ENCODE measurements at regions of chr3 and their contacts with region 1.

Region 1: GRCh38 chr3:125585595-125586223 is 9.6 kb downstream of the OSBPL11 start:
- DNase-seq: no peak
- H3K4me3 ChIP-seq: no peak overlapping the region
- H3K27ac ChIP-seq: no peak overlapping the region
- H3K4me1 ChIP-seq: peaks cover 5 to 74% (median 47%) of the 10 kb centered on the region in 6 donors
- H3K27me3 ChIP-seq: no peaks in the 10 kb centered on the region
- CTCF ChIP-seq: peak; percentile 52 to 82 (median 75)
- POLR2A ChIP-seq: no peak

Region 2: DNA sequence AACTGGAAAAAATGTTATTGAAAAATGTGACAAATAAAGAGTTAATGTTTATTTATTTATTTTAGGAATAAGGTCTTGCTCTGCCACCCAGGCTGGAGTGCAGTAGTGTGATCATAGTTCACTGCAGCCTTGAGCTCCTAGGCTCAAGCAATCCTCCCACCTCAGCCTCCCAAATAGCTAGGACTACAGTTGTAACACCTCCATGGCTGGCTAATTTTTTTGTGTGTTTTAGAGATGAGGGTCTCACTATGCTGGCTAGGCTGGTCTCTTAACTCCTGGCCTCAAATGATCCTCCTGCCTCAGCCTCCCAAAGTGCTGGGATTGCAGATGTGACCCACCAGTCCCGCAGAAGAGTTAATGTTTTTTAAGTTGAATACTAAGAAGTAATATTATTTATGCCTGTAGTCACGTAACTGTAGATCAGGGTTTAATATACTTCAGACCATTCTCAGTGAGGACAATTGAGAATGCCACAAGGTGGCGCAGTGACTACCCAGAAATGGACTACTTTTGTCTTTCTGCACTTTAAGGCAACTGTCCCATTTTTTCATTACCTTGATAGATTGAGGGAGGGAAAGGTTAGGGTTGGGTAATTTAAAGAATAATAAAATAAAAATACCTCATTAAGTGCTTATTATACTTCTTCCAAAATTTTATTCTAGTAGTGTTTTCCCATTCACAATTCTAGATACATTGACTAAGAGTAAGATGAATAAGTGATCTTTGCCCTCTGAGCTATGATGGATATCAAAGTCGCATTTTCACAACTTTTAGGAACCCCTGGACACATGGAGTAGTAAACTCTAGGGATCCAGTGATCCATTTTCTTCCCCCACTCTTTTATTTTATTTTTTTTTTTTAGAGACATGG is 657.1 kb before region 1 on chr3:
- intact Hi-C with region 1: loop called (anchors 10 kb)
- DNase-seq: no peak
- H3K4me3 ChIP-seq: no peak overlapping the region
- H3K27ac ChIP-seq: no peak overlapping the region
- H3K4me1 ChIP-seq: peaks cover 0 to 4% (median 0%) of the 10 kb centered on the region in 6 donors
- H3K27me3 ChIP-seq: no peaks in the 10 kb centered on the region
- CTCF ChIP-seq: peak; percentile 46 to 77 (median 68)
- POLR2A ChIP-seq: no peak

Region 3: DNA sequence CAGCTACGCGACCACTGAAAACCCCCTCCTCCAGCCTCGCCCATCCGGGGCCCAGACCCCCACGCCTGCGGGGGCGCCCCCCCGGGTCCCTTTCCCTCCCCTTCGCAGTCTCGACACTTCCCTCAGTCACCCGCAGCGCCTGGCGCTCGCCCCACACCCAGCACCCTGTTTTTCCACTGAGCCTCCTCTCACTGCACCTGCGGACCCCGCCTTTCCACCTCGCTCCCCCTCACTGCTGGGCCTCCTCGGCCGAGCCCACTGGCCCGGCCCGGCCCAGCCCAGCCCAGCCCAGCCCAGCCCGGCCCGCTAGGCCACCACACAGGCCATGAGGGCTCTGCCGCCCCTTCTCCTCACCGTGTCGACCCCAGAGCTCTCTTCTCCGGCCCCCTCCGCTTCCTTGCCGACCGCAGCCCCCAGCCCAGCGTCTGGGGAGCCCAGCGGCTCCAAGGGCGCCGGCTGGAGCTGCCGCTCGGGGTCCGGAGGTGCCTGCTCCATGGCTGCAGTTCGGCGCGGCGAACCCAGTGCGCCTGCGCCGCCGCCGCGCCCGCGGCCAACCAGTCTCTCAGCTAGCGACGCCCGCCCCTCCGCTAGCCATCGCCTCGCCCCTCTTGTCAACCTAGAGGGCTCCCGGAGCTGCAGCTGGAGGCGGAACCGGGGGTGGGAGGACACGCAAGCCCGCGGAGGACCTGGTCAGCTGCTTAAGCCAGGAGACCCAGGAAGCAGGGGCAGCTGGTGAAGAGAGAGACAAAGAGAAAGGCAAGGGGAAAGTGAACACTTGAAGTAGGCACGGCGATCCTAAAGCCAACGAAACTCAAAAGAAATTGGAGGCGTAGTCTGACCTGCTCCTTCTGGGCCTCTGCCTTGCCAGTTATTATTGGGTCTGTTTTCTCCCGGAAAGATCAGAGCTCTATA is 65.8 kb before region 1 on chr3 and contains the start of gene SNX4:
- intact Hi-C with region 1: loop called (anchors 10 kb)
- DNase-seq: peak; percentile 97
- H3K4me3 ChIP-seq: peak within 1 kb of the TSS; percentile 58 to 96 (median 78)
- H3K27ac ChIP-seq: peak within 1 kb of the TSS; percentile 66 to 88 (median 83)
- H3K4me1 ChIP-seq: peaks cover 10 to 56% (median 41%) of the 10 kb centered on the region in 6 donors
- H3K27me3 ChIP-seq: no peaks in the 10 kb centered on the region
- CTCF ChIP-seq: no peak
- POLR2A ChIP-seq: peak in 1 of 3 donors; percentile 32
- total RNA-seq, gene SNX4: 25.1 to 55.3 (median 38.5) TPM

Measured in spleen (tissue), 13 donors.